ENCODE measurements at regions of chr12 and their contacts with region 1.

Region 1: GRCh38 chr12:1690578-1691122 is at the start of gene ADIPOR2:
- DNase-seq: peak; percentile 97
- ATAC-seq: peak; percentile 94
- H3K4me3 ChIP-seq: peak within 1 kb of the TSS; percentile 51 to 91 (median 78)
- H3K4me3 Mint-ChIP-seq: peak within 1 kb of the TSS; percentile 86
- H3K27ac ChIP-seq: peak within 1 kb of the TSS; percentile 81 to 97
- H3K27ac Mint-ChIP-seq: peak within 1 kb of the TSS; percentile 96
- H3K4me1 ChIP-seq: peaks cover 28 to 30% of the 10 kb centered on the region in 2 donors
- H3K4me1 Mint-ChIP-seq: peaks cover 36% of the 10 kb centered on the region
- H3K27me3 ChIP-seq: no peaks in the 10 kb centered on the region
- H3K27me3 Mint-ChIP-seq: peaks cover 6% of the 10 kb centered on the region
- CTCF ChIP-seq: no peak
- total RNA-seq, gene ADIPOR2: 35.9 and 38.9 TPM in 2 replicates

Region 2: DNA sequence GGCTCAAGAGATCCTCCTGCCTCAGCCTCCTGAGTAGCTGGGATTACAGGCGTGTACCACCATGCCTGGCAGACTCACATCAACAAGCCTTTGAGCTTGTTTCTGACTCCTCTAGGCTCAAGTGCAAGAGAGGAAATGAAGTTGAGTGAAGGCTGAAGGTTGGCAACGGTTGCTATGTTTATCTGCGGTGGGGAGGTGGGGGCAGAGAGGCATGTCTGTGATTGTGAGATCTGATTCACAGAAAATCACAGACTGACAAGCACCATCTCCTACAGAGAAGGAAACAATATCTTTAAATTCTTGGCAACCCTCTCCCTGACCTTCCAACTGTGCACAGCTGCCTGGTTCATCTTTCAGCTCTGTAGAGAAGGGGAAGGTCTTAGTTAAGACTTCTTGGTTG is 1005.3 kb before region 1 on chr12:
- CTCF ChIA-PET with region 1: no interaction called
- POLR2A ChIA-PET with region 1: no interaction called
- intact Hi-C with region 1: loop called (anchors 2 kb)
- DNase-seq: peak; percentile 93
- ATAC-seq: peak; percentile 78
- H3K4me3 ChIP-seq: peak overlapping the region in 4 of 5 experiments; percentile 5 to 31 (median 21)
- H3K4me3 Mint-ChIP-seq: peak overlapping the region; percentile 75
- H3K27ac ChIP-seq: peak overlapping the region; percentile 93 to 98
- H3K27ac Mint-ChIP-seq: peak overlapping the region; percentile 100
- H3K4me1 ChIP-seq: peaks cover 45 to 53% of the 10 kb centered on the region in 2 donors
- H3K4me1 Mint-ChIP-seq: peaks cover 49% of the 10 kb centered on the region
- H3K27me3 ChIP-seq: no peaks in the 10 kb centered on the region
- H3K27me3 Mint-ChIP-seq: no peaks in the 10 kb centered on the region
- CTCF ChIP-seq: no peak

Region 3: DNA sequence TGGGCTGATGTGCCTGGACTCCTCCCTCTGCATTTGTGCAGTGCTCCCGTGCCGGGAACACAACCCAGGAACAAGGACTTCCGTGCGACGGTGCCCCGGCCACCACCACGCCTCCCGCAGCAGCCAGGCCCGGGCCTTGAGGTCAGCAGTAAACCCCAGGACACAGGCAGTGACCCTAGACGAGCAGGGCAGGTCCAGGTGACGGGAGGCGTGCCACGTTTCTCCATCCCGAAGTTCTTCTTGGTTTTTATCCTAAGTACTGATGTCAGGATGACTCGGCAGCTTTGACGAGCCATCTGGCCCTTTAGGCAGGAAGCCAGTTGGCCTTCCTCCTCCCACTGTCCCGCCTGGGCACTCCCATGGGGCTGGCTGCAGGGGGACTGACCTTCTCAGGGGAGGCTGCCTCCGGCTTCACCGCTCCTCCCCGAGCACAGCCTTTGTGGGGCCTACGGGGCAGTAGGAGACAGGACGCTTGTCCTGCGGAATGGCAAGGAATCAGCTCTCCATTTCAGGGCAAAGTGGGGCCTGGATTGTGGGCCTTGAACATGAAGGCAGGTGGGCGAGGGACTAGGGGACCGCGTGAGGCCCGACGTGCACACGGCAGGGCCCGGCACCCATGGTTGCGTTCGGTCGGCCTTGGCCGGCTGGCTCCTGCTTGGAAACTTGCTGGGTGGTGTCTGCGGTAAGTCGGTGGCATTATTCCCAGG is 190.4 kb before region 1 on chr12:
- CTCF ChIA-PET with region 1: no interaction called
- POLR2A ChIA-PET with region 1: no interaction called
- intact Hi-C with region 1: no loop called
- DNase-seq: no peak
- ATAC-seq: no peak
- H3K4me3 ChIP-seq: no peak overlapping the region
- H3K4me3 Mint-ChIP-seq: no peak overlapping the region
- H3K27ac ChIP-seq: no peak overlapping the region
- H3K27ac Mint-ChIP-seq: no peak overlapping the region
- H3K4me1 ChIP-seq: peaks cover 0 to 4% of the 10 kb centered on the region in 2 donors
- H3K4me1 Mint-ChIP-seq: peaks cover 4% of the 10 kb centered on the region
- H3K27me3 ChIP-seq: peaks cover 0 to 3% (median 0%) of the 10 kb centered on the region in 4 experiments
- H3K27me3 Mint-ChIP-seq: peaks cover 26% of the 10 kb centered on the region
- CTCF ChIP-seq: no peak

Region 4: DNA sequence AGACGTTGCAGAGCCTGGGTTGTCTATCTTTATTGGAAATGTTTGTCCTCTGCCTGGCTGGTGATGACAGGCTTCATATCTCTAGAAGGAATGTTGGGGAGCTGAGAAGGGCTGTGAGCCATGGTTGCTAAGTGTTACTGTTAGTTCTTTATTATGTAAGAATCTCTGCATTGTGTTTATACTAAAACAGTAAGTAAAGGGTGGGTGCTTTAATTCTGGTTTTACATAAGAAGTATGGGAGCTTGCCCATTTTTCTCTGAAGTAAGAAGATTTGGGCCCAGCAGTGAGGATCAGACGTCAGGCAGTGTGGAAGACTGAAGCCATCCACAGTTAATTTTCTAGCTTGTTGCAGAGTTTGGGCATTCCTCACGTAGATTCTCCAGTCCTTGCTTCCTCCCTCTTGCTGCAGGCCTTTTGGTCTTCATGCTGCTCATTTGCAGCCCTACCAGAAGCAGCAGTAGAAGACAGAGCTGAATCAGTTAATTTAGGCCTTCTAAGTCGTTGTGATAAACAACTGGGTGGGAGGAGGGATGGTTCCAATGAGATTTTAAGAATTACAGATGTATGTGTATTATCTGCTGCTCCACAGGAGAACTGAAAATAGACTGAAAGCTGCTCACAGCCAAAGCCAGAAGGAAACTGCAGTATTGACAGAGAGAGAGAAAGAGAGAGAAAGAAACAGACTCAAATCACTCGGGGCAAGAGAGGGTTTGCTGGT is 40.2 kb before region 1 on chr12:
- CTCF ChIA-PET with region 1: interaction called, 23 read pairs
- POLR2A ChIA-PET with region 1: no interaction called
- intact Hi-C with region 1: no loop called
- DNase-seq: no peak
- ATAC-seq: no peak
- H3K4me3 ChIP-seq: no peak overlapping the region
- H3K4me3 Mint-ChIP-seq: no peak overlapping the region
- H3K27ac ChIP-seq: no peak overlapping the region
- H3K27ac Mint-ChIP-seq: no peak overlapping the region
- H3K4me1 ChIP-seq: peaks cover 0 to 19% of the 10 kb centered on the region in 2 donors
- H3K4me1 Mint-ChIP-seq: peaks cover 11% of the 10 kb centered on the region
- H3K27me3 ChIP-seq: no peaks in the 10 kb centered on the region
- H3K27me3 Mint-ChIP-seq: peaks cover 31% of the 10 kb centered on the region
- CTCF ChIP-seq: no peak

Region 5: GRCh38 chr12:1719139-1719538 is 28.5 kb after region 1 on chr12:
- CTCF ChIA-PET with region 1: no interaction called
- POLR2A ChIA-PET with region 1: no interaction called
- intact Hi-C with region 1: no loop called
- DNase-seq: no peak
- ATAC-seq: no peak
- H3K4me3 ChIP-seq: no peak overlapping the region
- H3K4me3 Mint-ChIP-seq: no peak overlapping the region
- H3K27ac ChIP-seq: no peak overlapping the region
- H3K27ac Mint-ChIP-seq: no peak overlapping the region
- H3K4me1 ChIP-seq: peaks cover 3 to 10% of the 10 kb centered on the region in 2 donors
- H3K4me1 Mint-ChIP-seq: peaks cover 39% of the 10 kb centered on the region
- H3K27me3 ChIP-seq: no peaks in the 10 kb centered on the region
- H3K27me3 Mint-ChIP-seq: no peaks in the 10 kb centered on the region
- CTCF ChIP-seq: no peak

Region 6: GRCh38 chr12:1776170-1776948 is 85.7 kb after region 1 on chr12:
- CTCF ChIA-PET with region 1: no interaction called
- POLR2A ChIA-PET with region 1: no interaction called
- intact Hi-C with region 1: loop called (anchors 5 kb)
- DNase-seq: no peak
- ATAC-seq: no peak
- H3K4me3 ChIP-seq: no peak overlapping the region
- H3K4me3 Mint-ChIP-seq: no peak overlapping the region
- H3K27ac ChIP-seq: no peak overlapping the region
- H3K27ac Mint-ChIP-seq: no peak overlapping the region
- H3K4me1 ChIP-seq: no peaks in the 10 kb centered on the region
- H3K4me1 Mint-ChIP-seq: no peaks in the 10 kb centered on the region
- H3K27me3 ChIP-seq: no peaks in the 10 kb centered on the region
- H3K27me3 Mint-ChIP-seq: no peaks in the 10 kb centered on the region
- CTCF ChIP-seq: no peak

Region 7: GRCh38 chr12:2004113-2004929 is 313.7 kb after region 1 on chr12 and contains the start of gene DCP1B:
- CTCF ChIA-PET with region 1: no interaction called
- POLR2A ChIA-PET with region 1: no interaction called
- intact Hi-C with region 1: loop called (anchors 1 kb)
- DNase-seq: peak; percentile 95
- ATAC-seq: peak; percentile 99
- H3K4me3 ChIP-seq: peak within 1 kb of the TSS; percentile 64 to 92 (median 92)
- H3K4me3 Mint-ChIP-seq: peak within 1 kb of the TSS; percentile 99
- H3K27ac ChIP-seq: peak within 1 kb of the TSS; percentile 81 to 93
- H3K27ac Mint-ChIP-seq: peak within 1 kb of the TSS; percentile 99
- H3K4me1 ChIP-seq: peaks cover 11 to 15% of the 10 kb centered on the region in 2 donors
- H3K4me1 Mint-ChIP-seq: peaks cover 26% of the 10 kb centered on the region
- H3K27me3 ChIP-seq: no peaks in the 10 kb centered on the region
- H3K27me3 Mint-ChIP-seq: no peaks in the 10 kb centered on the region
- CTCF ChIP-seq: no peak
- total RNA-seq, gene DCP1B: 18.0 and 18.1 TPM in 2 replicates